ENCODE measurements at regions of chr19 and their contacts with region 1.

Region 1: DNA sequence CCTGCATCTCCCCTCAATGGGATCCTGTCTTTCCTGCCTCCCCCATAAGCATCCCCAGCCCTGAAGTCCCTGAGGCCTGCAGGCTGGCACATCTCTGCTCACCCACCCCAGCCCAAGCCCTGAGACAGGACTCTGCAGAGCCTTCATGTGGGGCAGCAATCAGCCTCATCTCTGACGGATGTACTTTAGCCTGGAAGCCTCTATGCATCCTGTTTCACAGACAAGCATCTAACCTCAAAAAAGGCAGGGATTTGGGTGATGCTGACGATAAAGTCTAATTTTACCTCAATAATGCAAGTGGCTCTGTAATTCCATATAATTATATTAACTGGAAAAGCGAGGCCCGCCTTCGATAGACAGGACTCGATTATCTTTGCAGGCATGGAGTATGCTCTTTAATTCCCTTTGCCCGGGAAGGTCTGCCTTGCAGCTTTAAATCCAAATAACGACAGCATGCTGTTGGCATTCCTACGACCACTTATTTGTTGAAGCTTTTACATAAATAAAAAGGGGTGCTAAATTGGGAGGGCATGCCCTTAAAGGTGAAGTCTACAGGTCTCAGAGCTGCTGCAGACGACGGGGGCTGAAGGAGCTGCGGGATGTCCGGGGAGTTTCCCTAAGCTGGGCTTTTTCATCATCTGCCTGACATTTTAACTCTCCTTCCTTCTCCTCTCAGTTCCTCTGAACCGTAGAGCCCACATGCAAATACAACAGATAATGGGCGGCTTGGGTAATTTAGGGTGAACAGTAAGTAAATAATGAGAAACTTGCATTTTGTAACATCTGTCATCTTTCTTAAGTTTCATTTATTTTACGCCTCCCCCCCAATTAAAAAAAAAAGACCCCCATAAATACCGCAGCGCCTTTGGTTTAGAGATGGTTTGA is 211.5 kb downstream of the URI1 start:
- DNase-seq: no peak
- ATAC-seq: peak; percentile 94
- H3K4me3 Mint-ChIP-seq: peak overlapping the region; percentile 44
- H3K27ac Mint-ChIP-seq: no peak overlapping the region
- H3K4me1 Mint-ChIP-seq: peaks cover 20% of the 10 kb centered on the region
- H3K27me3 Mint-ChIP-seq: peaks cover 2% of the 10 kb centered on the region
- CTCF ChIP-seq: no peak

Region 2: GRCh38 chr19:30105727-30106126 is 47.8 kb before region 1 on chr19:
- CTCF ChIA-PET with region 1: no interaction called
- POLR2A ChIA-PET with region 1: no interaction called
- intact Hi-C with region 1: no loop called
- DNase-seq: no peak
- ATAC-seq: no peak
- H3K4me3 Mint-ChIP-seq: no peak overlapping the region
- H3K27ac Mint-ChIP-seq: no peak overlapping the region
- H3K4me1 Mint-ChIP-seq: no peaks in the 10 kb centered on the region
- H3K27me3 Mint-ChIP-seq: peaks cover 8% of the 10 kb centered on the region
- CTCF ChIP-seq: no peak

Region 3: DNA sequence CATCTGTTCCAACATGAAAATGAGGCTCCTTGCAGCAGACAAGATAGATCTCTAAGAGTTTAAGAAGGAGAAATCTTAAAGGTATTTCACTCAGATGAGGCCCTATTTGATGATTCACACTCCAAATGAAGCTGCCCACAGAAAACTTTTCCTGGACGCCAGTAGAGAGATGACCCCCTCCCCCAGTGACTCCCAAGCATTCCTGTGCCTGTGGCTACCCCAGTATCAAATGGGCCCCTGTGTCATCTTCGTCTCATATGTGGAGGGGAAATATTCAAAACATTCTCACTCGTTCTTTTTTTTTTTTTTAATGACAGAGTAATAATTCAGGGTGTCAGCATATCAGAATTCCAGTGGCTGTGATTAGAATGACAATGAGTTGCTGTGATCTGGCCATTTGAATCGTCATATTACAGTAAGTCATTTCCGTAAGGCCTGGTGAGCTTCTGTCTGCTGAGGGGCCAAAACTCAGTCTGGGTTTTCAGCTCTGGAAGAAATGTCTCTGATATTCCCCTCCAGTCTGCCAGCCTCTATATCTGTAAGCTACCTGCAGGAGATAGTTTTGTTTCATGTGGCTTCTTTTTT is 16.9 kb before region 1 on chr19:
- CTCF ChIA-PET with region 1: no interaction called
- POLR2A ChIA-PET with region 1: no interaction called
- intact Hi-C with region 1: no loop called
- DNase-seq: no peak
- ATAC-seq: no peak
- H3K4me3 Mint-ChIP-seq: no peak overlapping the region
- H3K27ac Mint-ChIP-seq: no peak overlapping the region
- H3K4me1 Mint-ChIP-seq: no peaks in the 10 kb centered on the region
- H3K27me3 Mint-ChIP-seq: peaks cover 2% of the 10 kb centered on the region
- CTCF ChIP-seq: no peak

Region 4: DNA sequence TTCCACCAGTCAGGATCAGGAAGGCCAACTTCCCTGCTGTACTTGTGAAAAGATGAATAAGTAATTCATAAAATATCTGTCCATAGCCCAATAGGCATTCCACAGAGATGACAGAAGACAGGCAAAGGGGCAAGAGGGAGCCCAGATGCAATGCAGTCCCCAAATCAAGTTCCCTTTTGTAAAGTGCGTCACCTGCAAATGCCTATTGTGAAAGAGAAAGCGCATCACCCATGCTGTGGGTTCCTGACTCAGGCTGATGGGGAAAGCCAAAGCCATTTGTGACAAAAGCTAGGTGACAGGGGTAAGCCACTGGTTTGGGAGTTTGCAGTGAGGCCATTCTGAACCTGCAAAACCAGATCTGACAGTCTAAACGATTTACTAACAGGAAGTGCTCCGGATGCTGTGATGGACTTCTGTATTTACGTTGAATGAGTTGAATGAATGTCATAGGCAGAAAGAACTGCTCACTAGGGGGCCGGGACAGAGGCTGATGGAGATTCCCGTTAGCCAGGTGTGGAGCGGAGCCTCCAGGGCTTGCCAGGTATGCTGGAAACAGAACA is 61.2 kb after region 1 on chr19:
- CTCF ChIA-PET with region 1: no interaction called
- POLR2A ChIA-PET with region 1: no interaction called
- intact Hi-C with region 1: no loop called
- DNase-seq: no peak
- ATAC-seq: no peak
- H3K4me3 Mint-ChIP-seq: peak overlapping the region; percentile 26
- H3K27ac Mint-ChIP-seq: no peak overlapping the region
- H3K4me1 Mint-ChIP-seq: peaks cover 6% of the 10 kb centered on the region
- H3K27me3 Mint-ChIP-seq: peaks cover 8% of the 10 kb centered on the region
- CTCF ChIP-seq: no peak

Region 5: GRCh38 chr19:30227661-30228428 is 74.3 kb after region 1 on chr19:
- CTCF ChIA-PET with region 1: no interaction called
- POLR2A ChIA-PET with region 1: no interaction called
- intact Hi-C with region 1: loop called (anchors 10 kb)
- DNase-seq: peak; percentile 41
- ATAC-seq: peak; percentile 74
- H3K4me3 Mint-ChIP-seq: no peak overlapping the region
- H3K27ac Mint-ChIP-seq: no peak overlapping the region
- H3K4me1 Mint-ChIP-seq: peaks cover 36% of the 10 kb centered on the region
- H3K27me3 Mint-ChIP-seq: peaks cover 57% of the 10 kb centered on the region
- CTCF ChIP-seq: no peak

Region 6: GRCh38 chr19:30406220-30407067 is 252.9 kb after region 1 on chr19:
- CTCF ChIA-PET with region 1: no interaction called
- POLR2A ChIA-PET with region 1: no interaction called
- intact Hi-C with region 1: no loop called
- DNase-seq: no peak
- ATAC-seq: no peak
- H3K4me3 Mint-ChIP-seq: no peak overlapping the region
- H3K27ac Mint-ChIP-seq: no peak overlapping the region
- H3K4me1 Mint-ChIP-seq: no peaks in the 10 kb centered on the region
- H3K27me3 Mint-ChIP-seq: no peaks in the 10 kb centered on the region
- CTCF ChIP-seq: no peak

Measured in activated B cell treated with CpG ODN at 0.5 μM for 24 hours (primary cell).